SK-N-SH (cell line): ENCODE measurements at regions of chr3 and their contacts with region 1.

Region 1: DNA sequence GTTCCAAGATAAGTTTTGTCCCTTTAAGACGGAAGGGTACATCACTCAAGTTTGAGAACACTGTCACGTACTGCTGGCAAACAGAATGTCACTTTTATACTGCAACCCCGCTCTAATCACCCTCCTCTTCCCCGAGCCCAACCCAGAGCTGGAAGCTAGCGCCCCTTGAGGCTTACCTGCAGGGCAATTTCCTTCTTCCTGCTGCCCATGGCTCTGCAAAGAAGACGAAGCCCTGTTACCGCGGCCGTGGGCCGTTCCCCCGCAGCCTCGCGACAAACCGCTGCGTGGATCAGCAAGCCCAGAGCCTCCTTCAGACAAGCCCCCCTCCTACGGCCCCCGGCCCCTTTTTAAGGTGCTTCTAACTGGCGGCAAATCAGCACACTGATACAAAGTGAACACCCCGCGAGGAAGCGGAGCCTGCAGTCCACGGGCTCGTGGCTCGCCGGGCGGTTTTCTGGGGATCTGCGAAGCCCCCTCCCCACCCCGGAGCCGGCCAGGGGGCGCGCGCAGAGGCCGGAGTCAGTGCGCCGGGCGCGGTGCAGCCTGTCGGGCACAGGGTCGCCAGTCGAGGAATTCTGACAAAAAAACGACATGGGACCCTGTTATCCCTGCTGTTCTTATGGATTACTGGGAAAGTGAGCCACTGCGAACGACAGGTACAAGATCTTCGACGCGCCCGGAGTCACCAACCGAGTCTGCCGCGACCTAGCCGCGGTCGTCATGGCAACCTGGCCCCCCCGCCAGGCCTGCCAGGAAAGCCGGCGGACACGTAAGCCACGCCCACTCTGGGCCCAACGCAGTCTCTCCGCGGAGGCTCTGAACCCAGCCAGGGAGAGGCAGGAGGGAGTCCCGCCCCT is at the start of gene NME9:
- DNase-seq: peak; percentile 97
- H3K4me3 ChIP-seq: peak within 1 kb of the TSS; percentile 87
- H3K27ac ChIP-seq: peak within 1 kb of the TSS in 1 of 2 experiments; percentile 68; a peak in 1 of 4 replicates
- H3K4me1 ChIP-seq: peaks cover 3 to 5% of the 10 kb centered on the region in 2 experiments; a peak in 2 of 4 replicates
- H3K27me3 ChIP-seq: no peaks in the 10 kb centered on the region
- CTCF ChIP-seq: peak; percentile 74
- EP300 ChIP-seq: no peak
- RAD21 ChIP-seq: peak; percentile 50
- polyA plus RNA-seq, gene NME9: 0.43 and 0.65 TPM in 2 replicates

Region 2: GRCh38 chr3:137998121-137999042 is 331.0 kb before region 1 on chr3:
- CTCF ChIA-PET with region 1: no interaction called
- POLR2A ChIA-PET with region 1: no interaction called
- DNase-seq: no peak
- H3K4me3 ChIP-seq: no peak overlapping the region
- H3K27ac ChIP-seq: no peak overlapping the region
- H3K4me1 ChIP-seq: no peaks in the 10 kb centered on the region
- H3K27me3 ChIP-seq: no peaks in the 10 kb centered on the region
- CTCF ChIP-seq: no peak
- EP300 ChIP-seq: no peak
- RAD21 ChIP-seq: no peak

Region 3: GRCh38 chr3:138314751-138315150 is 14.6 kb before region 1 on chr3:
- CTCF ChIA-PET with region 1: interaction called, 11 read pairs
- POLR2A ChIA-PET with region 1: no interaction called
- DNase-seq: no peak
- H3K4me3 ChIP-seq: no peak overlapping the region
- H3K27ac ChIP-seq: peak overlapping the region in 1 of 2 experiments; percentile 51; a peak in 2 of 4 replicates
- H3K4me1 ChIP-seq: peaks cover 0 to 10% of the 10 kb centered on the region in 2 experiments; a peak in 1 of 4 replicates
- H3K27me3 ChIP-seq: no peaks in the 10 kb centered on the region
- CTCF ChIP-seq: no peak
- EP300 ChIP-seq: no peak
- RAD21 ChIP-seq: no peak

Region 4: DNA sequence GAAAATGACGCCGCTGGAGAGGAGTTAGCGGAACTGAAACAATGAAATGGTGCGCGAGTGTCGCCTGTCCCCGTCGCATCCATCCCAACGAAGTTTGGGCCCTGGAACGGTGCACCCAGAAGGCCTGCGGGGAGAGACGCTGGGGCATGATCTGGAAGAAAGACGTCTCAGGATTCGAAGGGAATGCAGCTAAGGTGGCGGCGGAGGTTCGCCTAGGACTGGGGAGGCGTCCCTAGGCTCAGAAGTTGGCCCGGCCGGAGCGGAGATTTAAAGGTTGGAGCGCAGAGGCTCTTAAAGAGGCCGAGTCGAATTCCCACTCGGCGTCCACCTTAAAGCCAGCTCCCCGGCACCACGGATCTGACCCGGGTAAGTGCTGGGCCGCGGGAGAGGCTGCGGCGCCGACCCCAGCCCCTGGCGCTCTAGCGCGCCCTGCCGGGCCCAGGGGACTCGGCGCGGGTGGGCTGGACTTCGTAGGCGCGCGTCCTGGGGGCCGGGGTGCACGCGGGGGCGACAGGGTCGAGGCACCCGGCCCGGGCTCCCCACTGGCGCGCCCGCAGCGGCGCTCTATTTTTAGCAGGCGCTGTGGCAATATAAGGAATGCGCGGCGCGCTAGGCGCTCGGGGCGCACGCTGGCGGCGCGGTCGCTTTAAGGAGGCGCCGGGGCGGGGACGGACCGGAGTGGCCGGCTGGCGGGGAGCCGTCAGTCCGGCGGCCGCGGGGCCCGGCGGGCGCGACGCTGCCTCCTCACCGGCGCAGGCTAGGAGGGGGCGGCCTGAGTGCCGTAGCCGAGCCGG is 18.8 kb after region 1 on chr3 and contains the start of gene MRAS:
- CTCF ChIA-PET with region 1: interaction called, 27 read pairs
- POLR2A ChIA-PET with region 1: interaction called, 4 read pairs
- DNase-seq: peak; percentile 91
- H3K4me3 ChIP-seq: peak within 1 kb of the TSS; percentile 68 to 92
- H3K27ac ChIP-seq: peak within 1 kb of the TSS; percentile 66 to 67
- H3K4me1 ChIP-seq: peaks cover 4 to 9% of the 10 kb centered on the region in 2 experiments; a peak in 1 of 4 replicates
- H3K27me3 ChIP-seq: no peaks in the 10 kb centered on the region
- CTCF ChIP-seq: peak; percentile 56
- EP300 ChIP-seq: no peak
- RAD21 ChIP-seq: peak; percentile 55
- polyA plus RNA-seq, gene MRAS: 25.0 and 28.1 TPM in 2 replicates

Region 5: DNA sequence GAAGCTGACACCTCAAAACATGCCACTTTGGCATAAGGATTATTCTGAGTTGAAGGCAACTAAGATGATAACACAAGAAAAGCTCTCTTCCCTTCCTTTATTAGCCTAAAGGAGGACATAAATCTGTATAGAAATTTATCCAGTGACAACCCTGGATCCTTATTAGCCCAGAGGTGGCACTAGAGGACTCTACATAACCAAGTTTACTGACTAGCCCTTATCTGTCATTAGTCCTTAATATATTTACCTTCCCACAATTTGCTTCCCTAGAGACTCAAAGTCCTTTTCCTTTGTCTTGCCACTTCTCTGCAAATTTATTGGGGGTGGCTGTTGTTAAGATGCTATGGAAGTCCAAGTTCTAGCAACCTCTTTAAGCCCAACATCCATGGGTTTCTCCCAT is 238.0 kb after region 1 on chr3:
- CTCF ChIA-PET with region 1: no interaction called
- POLR2A ChIA-PET with region 1: no interaction called
- DNase-seq: no peak
- H3K4me3 ChIP-seq: no peak overlapping the region
- H3K27ac ChIP-seq: no peak overlapping the region
- H3K4me1 ChIP-seq: no peaks in the 10 kb centered on the region
- H3K27me3 ChIP-seq: no peaks in the 10 kb centered on the region
- CTCF ChIP-seq: no peak
- EP300 ChIP-seq: no peak
- RAD21 ChIP-seq: no peak